Body of pancreas (tissue), 4 donors: ENCODE measurements at regions of chr3 and their contacts with region 1.

Region 1: GRCh38 chr3:52001443-52001974 is 5.8 kb upstream of the RPL29 start:
- DNase-seq: peak; percentile 70 to 81 (median 76)
- ATAC-seq: peak; percentile 64
- H3K4me3 ChIP-seq: no peak overlapping the region
- H3K27ac ChIP-seq: no peak overlapping the region
- H3K4me1 ChIP-seq: peaks cover 25% of the 10 kb centered on the region
- H3K27me3 ChIP-seq: no peaks in the 10 kb centered on the region
- CTCF ChIP-seq: peak; percentile 76 to 94 (median 88)
- POLR2A ChIP-seq: no peak

Region 2: DNA sequence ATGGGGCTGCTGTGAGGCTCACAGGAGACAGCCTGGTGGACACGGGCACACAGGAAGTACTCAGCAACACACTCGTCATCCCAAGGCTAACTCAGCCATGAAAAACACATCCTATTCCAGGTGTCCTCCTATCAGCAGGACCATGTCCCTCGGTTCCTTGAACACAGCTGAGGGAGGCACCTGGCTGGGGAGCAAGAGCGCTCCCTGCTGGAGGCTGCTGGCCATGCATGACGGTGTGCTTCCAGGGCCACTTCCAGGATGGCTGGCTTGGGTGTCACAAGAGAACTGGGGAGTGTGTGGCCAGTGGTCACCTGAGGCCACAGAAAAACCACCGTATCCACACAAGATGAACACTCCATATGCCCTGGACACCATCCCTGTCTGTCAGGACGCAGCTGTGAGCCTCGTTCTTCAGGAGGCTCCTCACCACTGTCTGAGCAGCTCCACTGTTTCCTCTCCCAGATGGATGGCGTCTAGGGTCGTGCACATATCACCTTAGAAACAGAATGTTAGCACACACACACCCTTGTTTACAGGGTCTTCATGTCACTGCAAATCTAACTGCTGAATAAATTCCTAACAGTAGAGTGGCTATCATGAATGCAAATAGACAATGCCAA is 121.7 kb after region 1 on chr3:
- intact Hi-C with region 1: loop called (anchors 5 kb)
- DNase-seq: peak; percentile 72 to 82 (median 80)
- ATAC-seq: peak; percentile 89
- H3K4me3 ChIP-seq: no peak overlapping the region
- H3K27ac ChIP-seq: no peak overlapping the region
- H3K4me1 ChIP-seq: no peaks in the 10 kb centered on the region
- H3K27me3 ChIP-seq: no peaks in the 10 kb centered on the region
- CTCF ChIP-seq: peak; percentile 83 to 95 (median 93)
- POLR2A ChIP-seq: no peak

Region 3: DNA sequence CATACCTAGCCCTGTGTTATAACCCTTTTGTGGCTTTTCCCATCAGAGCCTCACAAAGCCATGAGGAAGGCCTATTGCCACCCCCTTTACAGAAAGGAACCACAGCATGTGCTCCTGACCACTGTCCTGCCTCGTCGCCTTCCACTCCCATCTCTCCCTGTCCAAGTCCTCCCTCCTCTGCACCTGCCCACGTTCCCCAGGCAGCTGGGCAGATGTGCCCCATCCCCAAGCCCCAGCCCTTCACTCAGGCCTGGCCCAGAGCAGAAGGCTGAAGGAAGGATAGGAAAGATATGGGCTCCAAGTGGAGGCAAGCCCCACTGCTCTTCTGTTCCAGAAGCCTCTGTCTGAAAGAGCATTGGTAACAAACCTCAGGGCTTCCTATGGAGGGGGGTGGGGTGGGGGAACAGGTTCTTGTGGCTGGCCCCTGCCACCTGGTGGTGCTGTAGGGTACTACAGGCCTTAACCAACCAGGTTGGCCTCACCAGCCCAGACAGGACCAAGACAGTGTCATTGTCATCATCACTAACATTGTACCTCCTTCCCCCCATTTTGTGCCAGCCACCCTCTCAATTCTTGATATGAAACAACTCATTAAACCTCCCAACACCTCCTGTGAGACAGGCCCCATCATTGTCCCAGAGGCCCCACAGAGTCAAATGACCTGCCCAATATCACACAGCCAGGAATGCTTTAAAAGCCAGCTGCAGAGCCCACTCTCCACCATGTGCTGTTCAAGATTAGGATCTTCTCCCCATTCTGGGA is 142.7 kb after region 1 on chr3:
- intact Hi-C with region 1: loop called (anchors 5 kb)
- DNase-seq: peak; percentile 85 to 91 (median 88)
- ATAC-seq: peak; percentile 89
- H3K4me3 ChIP-seq: no peak overlapping the region
- H3K27ac ChIP-seq: no peak overlapping the region
- H3K4me1 ChIP-seq: no peaks in the 10 kb centered on the region
- H3K27me3 ChIP-seq: no peaks in the 10 kb centered on the region
- CTCF ChIP-seq: peak; percentile 85 to 96 (median 94)
- POLR2A ChIP-seq: no peak